Activated CD4-positive, alpha-beta T cell treated with anti-CD3 and anti-CD28 coated beads, Interleukin-2, amount 10 ng/mL, durations not matched to agents 24 days and 14 days (primary cell): ENCODE measurements at regions of chr1 and their contacts with region 1.

Region 1: DNA sequence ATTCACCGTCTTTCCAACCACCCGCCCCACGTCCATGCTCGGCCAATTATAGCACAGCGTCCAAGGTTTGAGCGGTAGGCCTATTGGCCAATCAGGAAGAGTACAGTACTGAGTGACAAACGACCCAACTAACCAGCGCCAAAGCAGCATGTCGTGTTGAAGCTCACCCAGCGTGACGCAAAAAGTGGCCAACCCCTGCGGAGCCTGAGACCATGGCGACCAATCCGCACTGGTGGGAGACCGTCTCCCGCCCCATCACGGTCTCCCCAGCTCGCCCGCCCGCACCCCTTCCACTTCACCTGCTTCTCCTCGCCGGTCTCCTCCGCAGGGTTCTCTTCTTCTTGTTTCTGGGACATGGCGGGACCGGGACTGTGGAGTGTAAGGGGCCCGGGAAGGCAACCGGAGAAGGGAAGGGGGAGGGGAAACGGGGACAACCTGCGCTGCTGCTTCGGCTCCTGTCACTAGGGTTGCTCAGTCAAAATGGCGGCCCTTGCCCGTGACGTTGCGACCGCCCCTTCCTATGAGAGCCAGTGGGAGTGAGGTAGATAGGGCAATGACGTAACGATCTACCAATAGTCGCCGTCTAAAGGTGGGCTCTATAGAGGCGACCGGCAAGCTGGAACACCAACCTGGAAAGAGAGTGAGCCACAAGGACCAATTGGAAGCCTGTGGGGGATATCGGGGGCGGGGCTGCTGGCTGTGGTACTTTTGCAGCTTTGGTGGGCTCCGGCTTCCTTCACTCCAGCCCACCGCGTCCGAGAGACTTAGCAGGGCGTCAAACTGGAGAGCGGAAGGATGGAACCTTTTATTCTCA is at the start of gene ENSA:
- DNase-seq: peak; percentile 98
- H3K4me3 Mint-ChIP-seq: no peak within 1 kb of the TSS
- H3K27ac Mint-ChIP-seq: no peak within 1 kb of the TSS
- H3K4me1 Mint-ChIP-seq: peaks cover 26% of the 10 kb centered on the region
- H3K27me3 Mint-ChIP-seq: no peaks in the 10 kb centered on the region
- total RNA-seq, gene ENSA: 244 and 248 TPM in 2 replicates

Region 2: DNA sequence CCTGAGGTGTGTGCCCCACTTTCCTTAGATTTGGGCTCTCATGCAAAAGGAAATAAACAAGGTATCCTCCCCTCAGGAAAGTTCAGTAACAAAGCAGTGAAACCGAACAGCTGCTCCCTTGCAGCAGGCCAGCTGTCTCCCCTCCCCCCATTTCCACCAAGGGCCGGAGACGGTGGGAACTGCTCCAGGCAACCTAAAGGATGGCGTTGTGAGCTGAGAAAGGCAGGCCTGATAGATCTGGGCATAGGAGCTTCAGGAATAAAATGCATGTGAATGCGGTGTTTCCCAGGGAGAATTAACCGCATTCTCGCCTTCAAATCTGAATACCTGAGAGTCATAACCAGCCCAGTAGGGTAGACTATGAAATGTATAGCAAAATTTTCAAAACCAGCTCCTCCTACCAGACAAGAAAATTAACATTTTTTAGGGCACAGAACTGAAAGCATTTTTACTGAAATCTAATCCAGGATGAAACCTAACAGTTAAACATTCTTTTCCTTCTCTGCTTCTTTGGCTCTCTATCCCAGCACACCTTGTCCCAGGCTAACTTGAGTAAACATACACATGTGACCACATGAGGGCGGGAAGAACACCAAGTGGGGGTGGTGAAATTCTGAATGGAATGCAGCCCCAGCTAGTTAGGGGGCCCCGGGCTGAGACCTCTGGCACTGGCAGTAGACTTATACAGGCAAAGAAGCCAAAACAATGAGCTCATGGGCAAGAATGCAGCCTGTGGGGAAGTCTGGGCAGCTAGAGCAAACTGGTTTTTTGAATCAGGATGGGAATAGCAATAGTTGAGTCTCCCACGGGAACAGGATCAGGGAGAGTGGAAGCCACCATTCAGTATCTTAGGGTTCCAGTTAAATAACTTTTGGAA is 61.4 kb before region 1 on chr1:
- intact Hi-C with region 1: loop called (anchors 1 kb)
- DNase-seq: peak; percentile 90
- H3K4me3 Mint-ChIP-seq: peak overlapping the region; percentile 94
- H3K27ac Mint-ChIP-seq: peak overlapping the region; percentile 99
- H3K4me1 Mint-ChIP-seq: peaks cover 74% of the 10 kb centered on the region
- H3K27me3 Mint-ChIP-seq: no peaks in the 10 kb centered on the region

Region 3: DNA sequence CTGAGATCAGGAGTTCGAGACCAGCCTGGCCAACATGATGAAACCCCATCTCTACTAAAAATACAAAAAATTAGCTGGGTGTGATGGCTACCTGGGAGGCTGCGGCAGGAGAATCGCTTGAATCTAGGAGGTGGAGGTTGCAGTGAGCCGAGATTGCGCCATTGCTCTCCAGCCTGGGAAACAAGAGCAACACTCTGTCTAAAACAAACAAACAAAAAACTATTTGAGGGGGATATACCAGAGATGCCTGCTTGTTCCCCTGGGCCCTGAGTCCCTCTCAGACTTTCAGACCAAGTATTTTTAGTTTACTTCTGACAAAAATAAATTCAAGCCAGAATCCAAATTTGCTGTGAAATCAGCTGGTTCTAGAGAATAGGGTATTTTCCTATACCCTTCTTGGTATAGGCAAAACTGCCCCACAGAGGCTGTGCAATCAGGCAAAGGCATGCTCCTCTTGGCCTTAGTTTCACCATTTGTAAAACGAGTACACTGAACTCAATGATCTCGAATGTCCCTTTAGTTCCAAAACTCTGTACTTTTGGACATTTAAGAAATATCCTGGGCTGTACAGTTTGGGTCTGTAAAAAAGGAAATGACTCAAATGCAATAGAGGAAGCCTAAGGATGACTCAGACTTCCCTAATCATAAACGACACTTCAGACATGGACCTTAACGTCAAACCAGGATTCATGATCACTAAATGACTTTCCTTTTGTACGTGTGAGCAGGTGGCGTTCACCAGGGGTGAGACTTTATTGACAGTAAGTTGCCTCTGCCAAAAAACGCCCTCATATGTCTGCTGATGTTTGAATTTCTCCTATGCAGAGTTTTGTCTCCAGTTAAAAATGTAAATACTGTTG is 16.0 kb before region 1 on chr1:
- intact Hi-C with region 1: loop called (anchors 1 kb)
- DNase-seq: peak; percentile 84
- H3K4me3 Mint-ChIP-seq: peak overlapping the region; percentile 78
- H3K27ac Mint-ChIP-seq: peak overlapping the region; percentile 95
- H3K4me1 Mint-ChIP-seq: peaks cover 55% of the 10 kb centered on the region
- H3K27me3 Mint-ChIP-seq: no peaks in the 10 kb centered on the region

Region 4: DNA sequence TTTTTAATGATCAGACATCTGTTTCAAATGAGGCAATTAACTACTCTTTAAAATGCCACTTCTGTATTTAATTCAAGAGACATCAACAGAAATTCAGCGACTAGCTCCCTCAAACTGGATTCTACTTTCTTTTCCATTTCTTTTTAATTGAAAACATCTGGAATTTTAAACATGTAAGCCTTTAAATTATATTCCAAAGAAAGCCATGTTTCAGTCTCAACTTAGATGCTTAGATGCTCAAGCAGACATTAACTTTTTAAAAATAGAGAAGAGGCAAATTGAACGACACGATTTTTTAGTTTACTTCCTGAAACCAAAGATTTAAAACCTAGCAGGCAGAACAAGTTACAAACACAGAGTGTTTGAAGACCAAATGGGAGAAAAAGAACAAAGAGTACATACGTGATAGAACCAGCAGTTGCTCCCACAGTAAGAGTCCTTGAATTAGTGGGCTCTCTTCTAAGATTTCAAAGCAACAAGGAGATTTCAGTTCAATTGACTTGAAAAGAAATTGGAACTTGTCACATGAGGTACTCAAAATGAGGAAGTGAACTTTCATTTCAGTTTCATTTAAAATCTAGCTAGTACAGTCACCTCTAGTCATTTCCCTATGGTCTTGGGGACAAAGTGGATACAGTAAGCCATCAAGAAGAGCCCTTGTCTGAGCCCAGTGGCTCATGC is 136.1 kb after region 1 on chr1 and contains the start of gene CTSS:
- intact Hi-C with region 1: loop called (anchors 5 kb)
- DNase-seq: peak; percentile 70
- H3K4me3 Mint-ChIP-seq: peak within 1 kb of the TSS; percentile 83
- H3K27ac Mint-ChIP-seq: peak within 1 kb of the TSS; percentile 91
- H3K4me1 Mint-ChIP-seq: peaks cover 30% of the 10 kb centered on the region
- H3K27me3 Mint-ChIP-seq: no peaks in the 10 kb centered on the region
- total RNA-seq, gene CTSS: 26.9 and 28.3 TPM in 2 replicates

Region 5: DNA sequence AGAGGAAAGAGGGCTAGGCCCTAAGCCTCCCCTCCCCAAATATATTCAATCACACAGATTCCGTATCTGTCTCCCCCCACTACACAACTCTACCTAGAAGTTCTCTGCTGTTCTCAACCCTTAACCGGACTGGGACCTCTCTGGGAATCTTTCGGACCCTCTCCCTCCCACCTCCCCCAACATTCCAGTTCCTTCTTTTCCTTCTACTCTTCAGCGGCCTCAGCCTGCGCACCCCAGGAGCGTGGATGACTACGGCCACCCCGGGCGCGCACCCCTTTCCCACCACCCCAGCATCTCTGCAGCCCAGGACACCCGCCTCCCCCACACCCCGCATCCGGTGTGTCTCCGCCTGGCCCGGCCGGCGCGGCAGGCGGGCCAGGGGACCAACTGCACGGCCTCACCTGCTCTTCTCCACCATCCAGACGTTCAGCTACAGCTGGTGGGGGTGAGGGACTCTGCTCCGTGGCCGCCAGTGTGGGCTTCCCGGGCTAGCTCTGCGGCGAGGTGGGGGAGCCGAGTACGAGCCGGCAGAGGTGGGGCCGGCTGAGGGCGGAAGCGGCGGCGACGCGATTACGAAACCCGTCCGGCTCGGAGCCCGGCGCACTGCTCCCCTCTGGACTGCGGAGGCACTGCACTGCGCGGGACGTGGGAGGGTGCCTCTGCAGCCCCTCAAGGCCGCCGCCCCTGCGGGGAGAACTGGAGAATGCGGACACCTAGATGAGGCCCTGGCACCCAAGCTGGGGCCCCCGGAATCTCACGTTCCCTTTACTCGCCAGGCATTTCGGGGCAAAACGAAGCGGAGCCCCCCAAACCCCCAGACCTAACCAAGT is 430.0 kb after region 1 on chr1 and contains the start of gene CDC42SE1:
- intact Hi-C with region 1: loop called (anchors 5 kb)
- DNase-seq: peak; percentile 96
- H3K4me3 Mint-ChIP-seq: peak within 1 kb of the TSS; percentile 99
- H3K27ac Mint-ChIP-seq: peak within 1 kb of the TSS; percentile 99
- H3K4me1 Mint-ChIP-seq: peaks cover 63% of the 10 kb centered on the region
- H3K27me3 Mint-ChIP-seq: no peaks in the 10 kb centered on the region
- total RNA-seq, gene CDC42SE1: 189 and 190 TPM in 2 replicates